A549 (cell line): ENCODE measurements at regions of chr22 and their contacts with region 1.

Region 1: GRCh38 chr22:48492366-48493320 is 1335.0 kb downstream of the BRD1 start:
- DNase-seq: peak; percentile 78 to 85
- ATAC-seq: peak; percentile 58 to 78
- H3K4me3 ChIP-seq: no peak overlapping the region
- H3K27ac ChIP-seq: peak overlapping the region; percentile 100
- H3K4me1 ChIP-seq: peaks cover 38% of the 10 kb centered on the region
- CTCF ChIP-seq: peak; percentile 72
- EP300 ChIP-seq: no peak
- POLR2A ChIP-seq: no peak
- RAD21 ChIP-seq: peak; percentile 90 to 93

Region 2: GRCh38 chr22:48335442-48336115 is 157.1 kb before region 1 on chr22:
- CTCF ChIA-PET with region 1: interaction called, 10 read pairs
- POLR2A ChIA-PET with region 1: interaction called, 3 read pairs
- DNase-seq: peak in 1 of 2 experiments; percentile 75
- ATAC-seq: peak in 1 of 2 experiments; percentile 85; a peak in 3 of 6 replicates
- H3K4me3 ChIP-seq: no peak overlapping the region
- H3K27ac ChIP-seq: peak overlapping the region; percentile 54 to 77
- H3K4me1 ChIP-seq: peaks cover 14% of the 10 kb centered on the region; the same call in 2 of the 3 replicates
- CTCF ChIP-seq: no peak
- EP300 ChIP-seq: no peak
- POLR2A ChIP-seq: no peak
- RAD21 ChIP-seq: peak in 1 of 2 experiments; percentile 30; a peak in 2 of 5 replicates

Region 3: GRCh38 chr22:48503876-48504275 is 11.2 kb after region 1 on chr22:
- CTCF ChIA-PET with region 1: interaction called, 13 read pairs
- POLR2A ChIA-PET with region 1: no interaction called
- DNase-seq: no peak
- ATAC-seq: no peak
- H3K4me3 ChIP-seq: no peak overlapping the region
- H3K27ac ChIP-seq: no peak overlapping the region
- H3K4me1 ChIP-seq: no peaks in the 10 kb centered on the region
- CTCF ChIP-seq: no peak
- EP300 ChIP-seq: no peak
- POLR2A ChIP-seq: no peak
- RAD21 ChIP-seq: no peak